Activated CD4-positive, alpha-beta T cell treated with anti-CD3 and anti-CD28 coated beads, Interleukin-2, amount 10 ng/mL, durations not matched to agents 7 days and 5 days (primary cell): ENCODE measurements at regions of chr12 and their contacts with region 1.

Region 1: GRCh38 chr12:57875753-57876547 is 29.4 kb upstream of the CTDSP2 start:
- DNase-seq: no peak
- H3K4me3 Mint-ChIP-seq: no peak overlapping the region
- H3K27ac Mint-ChIP-seq: no peak overlapping the region
- H3K4me1 Mint-ChIP-seq: peaks cover 8% of the 10 kb centered on the region
- H3K27me3 Mint-ChIP-seq: peaks cover 3% of the 10 kb centered on the region

Region 2: GRCh38 chr12:57865090-57865751 is 10.7 kb before region 1 on chr12:
- CTCF ChIA-PET with region 1: interaction called, 11 read pairs
- POLR2A ChIA-PET with region 1: no interaction called
- DNase-seq: peak; percentile 49
- H3K4me3 Mint-ChIP-seq: peak overlapping the region; percentile 69
- H3K27ac Mint-ChIP-seq: peak overlapping the region; percentile 41
- H3K4me1 Mint-ChIP-seq: peaks cover 7% of the 10 kb centered on the region
- H3K27me3 Mint-ChIP-seq: peaks cover 10% of the 10 kb centered on the region